ENCODE measurements at regions of chr12 and their contacts with region 1.

Region 1: GRCh38 chr12:89352492-89353187 is at the start of gene DUSP6:
- DNase-seq: peak; percentile 95 to 98
- H3K4me3 ChIP-seq: peak within 1 kb of the TSS; percentile 84
- H3K4me3 Mint-ChIP-seq: peak within 1 kb of the TSS; percentile 80
- H3K27ac Mint-ChIP-seq: peak within 1 kb of the TSS; percentile 98
- H3K4me1 ChIP-seq: peaks cover 25% of the 10 kb centered on the region
- H3K4me1 Mint-ChIP-seq: peaks cover 21% of the 10 kb centered on the region
- H3K27me3 ChIP-seq: no peaks in the 10 kb centered on the region
- H3K27me3 Mint-ChIP-seq: no peaks in the 10 kb centered on the region
- CTCF ChIP-seq: no peak
- total RNA-seq, gene DUSP6: 22.4 and 30.8 TPM in 2 replicates

Region 2: DNA sequence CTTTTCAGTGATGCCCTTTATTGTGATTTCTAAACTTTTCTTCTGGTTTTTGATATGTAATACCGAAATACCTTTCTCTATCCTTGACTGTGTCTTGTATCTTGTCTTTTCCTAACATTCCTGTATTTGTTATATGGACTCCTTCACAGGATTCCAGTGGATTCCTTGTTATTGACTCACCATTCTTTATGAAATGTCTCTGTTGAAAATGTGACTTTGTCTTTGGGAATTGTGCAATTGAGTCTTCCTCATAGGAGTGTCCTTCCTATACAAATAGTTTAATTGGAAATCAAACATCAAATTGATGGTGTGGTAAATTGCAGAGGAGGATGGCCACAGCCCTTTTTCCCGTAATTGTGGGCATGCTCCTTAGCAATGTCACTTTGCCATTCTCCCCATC is 475.8 kb before region 1 on chr12:
- CTCF ChIA-PET with region 1: no interaction called
- POLR2A ChIA-PET with region 1: no interaction called
- intact Hi-C with region 1: no loop called
- DNase-seq: no peak
- H3K4me3 ChIP-seq: no peak overlapping the region
- H3K4me3 Mint-ChIP-seq: no peak overlapping the region
- H3K27ac Mint-ChIP-seq: no peak overlapping the region
- H3K4me1 ChIP-seq: no peaks in the 10 kb centered on the region
- H3K4me1 Mint-ChIP-seq: peaks cover 7% of the 10 kb centered on the region
- H3K27me3 ChIP-seq: no peaks in the 10 kb centered on the region
- H3K27me3 Mint-ChIP-seq: no peaks in the 10 kb centered on the region
- CTCF ChIP-seq: no peak

Region 3: DNA sequence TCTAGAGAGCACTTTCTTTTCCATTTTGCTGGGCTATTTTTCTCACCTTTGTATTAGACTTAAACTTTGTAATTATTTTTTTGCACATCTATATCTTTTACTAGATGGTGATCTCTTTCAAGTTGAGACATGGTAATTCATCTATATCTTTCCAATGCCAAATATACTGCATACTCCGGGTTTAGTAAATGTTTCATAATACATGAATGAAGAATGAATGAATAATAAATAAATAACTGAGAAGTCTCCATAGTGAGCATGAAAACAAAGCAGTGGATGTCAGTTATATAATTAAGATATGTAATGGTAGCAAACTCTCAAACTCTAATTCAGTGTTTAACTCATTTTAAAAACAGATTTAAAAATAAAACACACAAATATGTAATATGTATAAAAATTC is 429.8 kb before region 1 on chr12:
- CTCF ChIA-PET with region 1: no interaction called
- POLR2A ChIA-PET with region 1: no interaction called
- intact Hi-C with region 1: loop called (anchors 10 kb)
- DNase-seq: no peak
- H3K4me3 ChIP-seq: no peak overlapping the region
- H3K4me3 Mint-ChIP-seq: no peak overlapping the region
- H3K27ac Mint-ChIP-seq: no peak overlapping the region
- H3K4me1 ChIP-seq: peaks cover 61% of the 10 kb centered on the region
- H3K4me1 Mint-ChIP-seq: peaks cover 47% of the 10 kb centered on the region
- H3K27me3 ChIP-seq: no peaks in the 10 kb centered on the region
- H3K27me3 Mint-ChIP-seq: no peaks in the 10 kb centered on the region
- CTCF ChIP-seq: no peak

Region 4: DNA sequence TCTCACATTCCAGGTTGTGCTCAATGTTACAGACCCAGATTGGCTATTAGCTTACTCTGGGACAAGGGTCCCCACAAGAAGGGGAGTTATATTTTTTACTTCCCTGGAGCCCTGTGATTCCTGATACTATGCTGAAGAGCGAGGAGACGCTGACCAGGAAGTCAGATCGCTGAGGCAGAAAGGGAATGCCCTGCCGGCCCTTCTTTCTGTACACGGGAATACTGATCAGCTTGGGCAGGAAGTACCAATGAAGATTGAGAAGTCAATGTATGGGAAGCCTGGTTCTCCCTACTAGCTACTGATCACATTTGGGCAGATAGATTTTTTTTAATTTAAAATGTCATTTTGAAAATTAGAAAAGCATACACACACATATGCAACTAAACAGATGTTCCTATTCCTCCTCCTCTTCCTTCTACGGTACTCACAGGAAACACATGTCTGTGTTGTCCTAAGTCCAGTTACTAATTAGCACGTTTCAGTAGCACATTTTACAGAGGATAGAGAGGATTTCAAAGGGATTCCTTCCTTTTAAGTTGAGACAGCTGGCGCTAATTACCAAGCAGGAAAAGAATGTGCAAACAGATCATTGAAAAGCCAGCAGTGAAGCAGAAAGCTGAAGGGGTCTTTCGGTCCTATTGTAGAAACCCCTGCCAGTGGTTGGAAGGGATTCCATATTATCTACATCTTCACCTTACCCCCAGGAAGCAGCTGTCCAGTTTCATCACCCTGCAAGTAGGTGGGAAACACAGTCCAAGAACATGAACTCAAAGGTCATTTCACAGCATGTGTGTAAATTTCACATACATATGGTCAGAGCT is 292.7 kb before region 1 on chr12:
- CTCF ChIA-PET with region 1: no interaction called
- POLR2A ChIA-PET with region 1: interaction called, 6 read pairs
- intact Hi-C with region 1: loop called (anchors 2 kb)
- DNase-seq: peak in 1 of 2 experiments; percentile 6
- H3K4me3 ChIP-seq: no peak overlapping the region
- H3K4me3 Mint-ChIP-seq: no peak overlapping the region
- H3K27ac Mint-ChIP-seq: peak overlapping the region; percentile 37
- H3K4me1 ChIP-seq: peaks cover 30% of the 10 kb centered on the region
- H3K4me1 Mint-ChIP-seq: peaks cover 29% of the 10 kb centered on the region
- H3K27me3 ChIP-seq: no peaks in the 10 kb centered on the region
- H3K27me3 Mint-ChIP-seq: no peaks in the 10 kb centered on the region
- CTCF ChIP-seq: no peak

Region 5: DNA sequence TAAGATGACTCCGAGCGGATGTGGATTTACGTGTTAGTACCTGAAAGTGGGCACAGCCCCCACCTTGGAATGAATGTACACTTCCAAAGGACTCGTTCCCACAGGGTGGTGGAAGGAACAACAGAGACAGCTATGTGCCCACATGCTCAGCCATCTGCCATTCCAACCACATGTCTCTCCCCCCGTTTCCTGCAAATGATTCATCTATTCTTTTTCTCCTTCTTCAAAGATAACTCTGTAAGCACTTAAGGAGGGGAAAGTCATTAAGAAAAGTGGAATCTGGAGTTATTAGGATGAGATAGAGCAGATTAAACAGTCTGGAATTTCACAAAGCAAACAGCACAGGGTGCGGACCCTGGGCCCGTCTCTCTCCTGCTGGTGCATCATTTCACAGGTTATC is 18.2 kb after region 1 on chr12:
- CTCF ChIA-PET with region 1: interaction called, 3 read pairs
- POLR2A ChIA-PET with region 1: interaction called, 14 read pairs
- intact Hi-C with region 1: loop called (anchors 1 kb)
- DNase-seq: peak; percentile 57 to 85
- H3K4me3 ChIP-seq: no peak overlapping the region
- H3K4me3 Mint-ChIP-seq: peak overlapping the region; percentile 7
- H3K27ac Mint-ChIP-seq: peak overlapping the region; percentile 62
- H3K4me1 ChIP-seq: peaks cover 81% of the 10 kb centered on the region
- H3K4me1 Mint-ChIP-seq: peaks cover 52% of the 10 kb centered on the region
- H3K27me3 ChIP-seq: no peaks in the 10 kb centered on the region
- H3K27me3 Mint-ChIP-seq: no peaks in the 10 kb centered on the region
- CTCF ChIP-seq: no peak

Region 6: DNA sequence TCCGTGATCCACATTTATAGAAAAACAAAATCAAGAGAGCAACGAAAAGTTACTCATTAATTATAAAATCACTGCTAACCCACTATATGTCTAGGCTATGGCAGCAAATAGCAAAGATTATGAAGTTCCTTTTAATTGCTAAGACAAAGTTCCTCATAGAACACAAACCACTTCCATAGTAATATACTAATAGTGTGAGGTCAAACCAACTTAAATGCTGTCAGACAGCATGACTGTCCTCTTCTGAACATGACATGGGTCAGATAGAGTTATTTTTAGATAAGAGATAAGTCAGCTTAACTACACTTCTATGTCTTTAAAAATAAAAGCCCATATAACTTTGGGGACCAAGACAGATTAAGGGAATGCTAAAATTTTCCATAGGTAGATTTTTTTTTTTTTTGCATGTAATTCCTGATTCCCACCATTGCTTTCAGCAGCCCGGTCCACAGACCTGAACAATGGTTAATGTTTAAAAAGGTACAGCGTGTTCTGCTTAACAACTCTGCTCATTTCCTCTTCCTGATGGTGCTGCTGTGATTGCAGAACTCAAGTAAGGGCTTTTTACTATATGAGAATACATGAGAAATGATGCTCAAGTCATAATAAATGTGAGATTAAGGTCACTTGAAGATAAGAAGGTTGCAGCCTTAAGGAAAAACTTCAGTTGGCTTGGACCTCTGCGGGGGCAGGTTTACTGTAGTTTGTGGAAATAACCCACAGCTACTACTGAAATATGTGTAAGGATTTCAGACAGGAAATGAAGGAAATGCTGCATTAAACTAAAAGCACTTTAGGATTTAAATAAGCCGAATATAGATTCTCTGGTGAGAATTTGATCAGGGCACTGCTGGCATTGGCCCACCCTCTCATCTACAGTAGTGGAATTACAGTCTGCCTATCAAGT is 37.4 kb after region 1 on chr12:
- CTCF ChIA-PET with region 1: no interaction called
- POLR2A ChIA-PET with region 1: interaction called, 23 read pairs
- intact Hi-C with region 1: loop called (anchors 5 kb)
- DNase-seq: no peak
- H3K4me3 ChIP-seq: no peak overlapping the region
- H3K4me3 Mint-ChIP-seq: peak overlapping the region; percentile 4
- H3K27ac Mint-ChIP-seq: peak overlapping the region; percentile 34
- H3K4me1 ChIP-seq: peaks cover 60% of the 10 kb centered on the region
- H3K4me1 Mint-ChIP-seq: peaks cover 43% of the 10 kb centered on the region
- H3K27me3 ChIP-seq: no peaks in the 10 kb centered on the region
- H3K27me3 Mint-ChIP-seq: no peaks in the 10 kb centered on the region
- CTCF ChIP-seq: no peak

Region 7: GRCh38 chr12:89461649-89462612 is 109.3 kb after region 1 on chr12:
- CTCF ChIA-PET with region 1: no interaction called
- POLR2A ChIA-PET with region 1: no interaction called
- intact Hi-C with region 1: loop called (anchors 1 kb)
- DNase-seq: peak in 1 of 2 experiments; percentile 43
- H3K4me3 ChIP-seq: no peak overlapping the region
- H3K4me3 Mint-ChIP-seq: no peak overlapping the region
- H3K27ac Mint-ChIP-seq: no peak overlapping the region
- H3K4me1 ChIP-seq: no peaks in the 10 kb centered on the region; the same call in 1 of the 2 replicates
- H3K4me1 Mint-ChIP-seq: peaks cover 11% of the 10 kb centered on the region
- H3K27me3 ChIP-seq: no peaks in the 10 kb centered on the region
- H3K27me3 Mint-ChIP-seq: no peaks in the 10 kb centered on the region
- CTCF ChIP-seq: peak; percentile 23 to 49

Measured in Caco-2 (cell line).